Activated CD4-positive, alpha-beta memory T cell treated with anti-CD3 and anti-CD28 coated beads for 36 hours (primary cell): ENCODE measurements at regions of chr2 and their contacts with region 1.

Region 1: DNA sequence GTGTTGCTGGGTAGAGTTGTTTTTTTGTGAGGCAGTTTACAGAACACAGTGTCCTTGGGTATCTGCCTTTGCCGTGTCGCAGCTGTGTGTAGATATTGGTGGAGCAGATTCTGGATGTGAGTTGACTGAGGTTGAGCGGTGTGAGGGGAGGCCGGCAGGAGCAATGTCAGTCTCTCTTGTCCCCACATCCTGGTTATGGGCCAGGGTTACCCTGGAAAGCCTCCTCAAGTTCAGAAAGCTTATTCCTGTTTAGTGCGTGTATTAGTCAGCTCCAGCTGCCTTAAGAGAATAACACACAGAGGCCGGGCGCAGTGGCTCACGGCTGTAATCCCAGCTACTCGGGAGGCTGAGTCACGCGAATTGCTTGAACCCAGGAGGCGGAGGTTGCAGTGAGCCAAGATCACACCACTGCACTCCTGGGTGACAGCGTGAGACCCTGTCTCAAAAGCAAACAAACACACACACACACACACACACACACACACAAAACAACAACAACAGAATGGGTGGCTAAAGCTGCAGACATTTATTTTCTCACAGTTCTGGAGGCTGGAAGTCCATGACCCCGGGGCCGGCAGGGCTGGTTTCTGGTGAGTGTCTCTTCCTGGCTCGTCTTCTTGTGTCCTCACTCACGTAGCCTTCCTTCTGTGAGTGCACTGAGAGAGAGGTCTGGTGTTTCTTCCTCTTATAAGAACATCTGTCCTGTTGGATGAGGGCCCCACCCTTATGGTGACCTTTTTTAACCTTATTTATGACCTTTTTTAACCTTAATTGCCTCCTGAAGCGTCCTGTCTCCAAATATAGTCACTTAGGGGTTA is 5.1 kb downstream of the NCK2 start:
- DNase-seq: peak; percentile 82
- H3K4me3 Mint-ChIP-seq: peak overlapping the region; percentile 70
- H3K27ac Mint-ChIP-seq: peak overlapping the region; percentile 99
- H3K4me1 Mint-ChIP-seq: peaks cover 80% of the 10 kb centered on the region
- H3K27me3 Mint-ChIP-seq: no peaks in the 10 kb centered on the region

Region 2: GRCh38 chr2:105324732-105325131 is 425.1 kb before region 1 on chr2:
- CTCF ChIA-PET with region 1: no interaction called
- POLR2A ChIA-PET with region 1: no interaction called
- intact Hi-C with region 1: no loop called
- DNase-seq: no peak
- H3K4me3 Mint-ChIP-seq: no peak overlapping the region
- H3K27ac Mint-ChIP-seq: no peak overlapping the region
- H3K4me1 Mint-ChIP-seq: peaks cover 49% of the 10 kb centered on the region
- H3K27me3 Mint-ChIP-seq: no peaks in the 10 kb centered on the region

Region 3: DNA sequence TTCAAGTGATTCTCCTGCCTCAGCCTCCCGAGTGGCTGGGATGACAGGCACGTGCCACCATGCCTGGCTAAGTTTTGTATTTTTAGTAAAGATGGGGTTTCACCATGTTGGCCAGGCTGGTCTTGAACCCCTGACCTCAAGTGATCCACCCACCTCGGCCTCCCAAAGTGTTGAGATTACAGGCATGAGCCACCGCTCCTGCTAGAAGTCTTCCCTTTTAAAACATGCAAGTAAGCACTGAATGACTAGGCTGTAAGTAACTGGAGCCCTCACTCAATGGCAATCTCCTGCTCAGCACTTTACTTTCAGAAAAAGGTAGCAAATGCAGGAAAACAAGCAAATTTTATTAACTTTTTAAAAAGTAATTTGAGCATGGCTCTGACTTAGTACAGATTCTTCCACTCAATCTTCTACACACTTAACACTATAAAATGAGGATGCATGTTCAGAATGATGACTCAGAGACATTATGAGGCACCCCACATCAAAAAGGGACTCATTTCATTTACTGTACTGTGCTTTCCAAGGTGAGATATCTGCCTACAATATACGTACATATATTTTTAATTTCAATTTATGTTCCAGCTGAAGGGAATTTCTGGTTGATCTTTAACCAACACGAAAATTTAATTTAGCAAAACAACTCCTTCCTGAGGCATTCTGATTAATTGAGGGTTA is 11.7 kb before region 1 on chr2:
- CTCF ChIA-PET with region 1: interaction called, 3 read pairs
- POLR2A ChIA-PET with region 1: interaction called, 5 read pairs
- intact Hi-C with region 1: loop called (anchors 1 kb)
- DNase-seq: peak; percentile 55
- H3K4me3 Mint-ChIP-seq: peak overlapping the region; percentile 64
- H3K27ac Mint-ChIP-seq: peak overlapping the region; percentile 96
- H3K4me1 Mint-ChIP-seq: peaks cover 90% of the 10 kb centered on the region
- H3K27me3 Mint-ChIP-seq: no peaks in the 10 kb centered on the region

Region 4: DNA sequence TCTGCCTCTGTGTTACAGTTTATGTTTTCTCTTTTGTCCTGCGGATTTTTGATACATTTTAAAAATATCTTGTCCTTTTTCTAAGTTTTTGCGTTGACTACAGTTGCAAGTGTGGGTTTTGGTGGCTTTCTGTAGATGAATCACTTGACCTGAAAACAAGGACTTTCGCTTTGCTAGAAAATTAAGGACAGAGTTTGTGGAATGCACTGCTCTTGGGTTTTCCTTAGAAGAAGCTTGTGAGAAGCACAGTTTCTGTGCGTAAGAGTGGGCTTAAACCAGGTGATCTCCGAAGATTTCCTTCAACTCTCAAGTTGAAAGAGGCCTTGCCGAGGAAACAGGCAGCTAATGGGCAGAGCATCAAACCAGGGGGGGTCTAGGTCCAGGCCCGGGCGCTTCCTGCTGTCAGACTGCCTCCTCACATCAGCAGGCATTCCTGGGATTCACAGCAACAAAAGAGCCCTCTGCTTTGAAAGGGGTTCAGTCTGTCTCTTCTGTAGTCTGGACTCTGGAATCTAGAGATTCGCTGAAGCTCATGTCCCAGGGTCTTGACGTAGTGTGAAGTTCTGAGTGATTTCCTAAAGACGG is 12.2 kb after region 1 on chr2:
- CTCF ChIA-PET with region 1: interaction called, 9 read pairs
- POLR2A ChIA-PET with region 1: interaction called, 91 read pairs
- intact Hi-C with region 1: loop called (anchors 1 kb)
- DNase-seq: no peak
- H3K4me3 Mint-ChIP-seq: peak overlapping the region; percentile 48
- H3K27ac Mint-ChIP-seq: peak overlapping the region; percentile 92
- H3K4me1 Mint-ChIP-seq: peaks cover 95% of the 10 kb centered on the region
- H3K27me3 Mint-ChIP-seq: no peaks in the 10 kb centered on the region

Region 5: DNA sequence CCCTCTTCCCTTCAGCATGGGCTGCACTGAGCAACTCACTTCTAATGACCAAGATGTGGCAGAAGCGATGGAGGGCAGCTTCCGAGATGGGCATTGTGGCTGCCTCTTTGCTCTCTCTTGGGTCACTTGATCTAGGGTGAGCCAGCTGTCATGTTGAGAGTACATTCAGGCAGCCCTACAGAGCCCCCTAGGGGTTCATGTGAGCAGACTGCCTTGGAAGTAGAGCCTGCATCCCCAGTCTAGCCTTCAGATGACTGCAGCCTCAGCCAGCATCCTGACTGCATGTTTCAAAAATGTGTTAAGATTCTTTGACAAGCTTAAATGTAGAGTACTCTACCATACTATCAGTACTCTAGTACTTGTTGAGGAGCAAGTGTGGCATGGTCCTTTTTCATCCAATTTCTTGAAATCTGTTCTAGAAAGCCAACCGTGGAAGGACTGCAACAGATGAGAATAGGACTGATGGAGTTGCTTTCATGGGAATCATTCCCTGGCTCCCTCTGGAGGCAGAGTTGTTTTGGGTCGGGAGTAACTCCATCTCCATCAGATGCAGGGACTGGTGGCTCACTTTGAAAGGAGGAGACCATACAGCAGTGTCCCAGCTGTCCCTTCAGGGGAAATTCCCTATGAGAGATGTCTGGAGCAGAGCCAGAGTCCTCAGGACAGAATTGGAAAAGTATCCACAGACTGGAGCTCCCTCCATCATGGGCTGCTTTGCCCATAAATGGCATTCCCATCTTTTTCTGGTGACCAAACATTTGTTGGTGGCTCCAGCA is 139.0 kb after region 1 on chr2:
- CTCF ChIA-PET with region 1: interaction called, 3 read pairs
- POLR2A ChIA-PET with region 1: interaction called, 3 read pairs
- intact Hi-C with region 1: loop called (anchors 1 kb)
- DNase-seq: peak; percentile 71
- H3K4me3 Mint-ChIP-seq: no peak overlapping the region
- H3K27ac Mint-ChIP-seq: peak overlapping the region; percentile 55
- H3K4me1 Mint-ChIP-seq: peaks cover 64% of the 10 kb centered on the region
- H3K27me3 Mint-ChIP-seq: no peaks in the 10 kb centered on the region